Naive thymus-derived CD4-positive, alpha-beta T cell (primary cell): ENCODE measurements at regions of chrX and their contacts with region 1.

Region 1: GRCh38 chrX:85003655-85004244 is at the start of gene APOOL:
- DNase-seq: peak; percentile 40 to 79 (median 69)
- ATAC-seq: peak; percentile 99
- H3K4me3 ChIP-seq: peak within 1 kb of the TSS; percentile 81
- H3K4me3 Mint-ChIP-seq: peak within 1 kb of the TSS; percentile 79 to 93 (median 90)
- H3K27ac ChIP-seq: peak within 1 kb of the TSS; percentile 67
- H3K27ac Mint-ChIP-seq: peak within 1 kb of the TSS; percentile 57 to 91 (median 75)
- H3K4me1 ChIP-seq: peaks cover 0 to 6% of the 10 kb centered on the region in 2 donors
- H3K4me1 Mint-ChIP-seq: peaks cover 9 to 35% (median 23%) of the 10 kb centered on the region in 7 donors
- H3K27me3 ChIP-seq: no peaks in the 10 kb centered on the region
- H3K27me3 Mint-ChIP-seq: peaks cover 0 to under 1% (median 0%) of the 10 kb centered on the region in 5 donors
- total RNA-seq, gene APOOL: 7.5 to 14.8 (median 10.2) TPM

Region 2: GRCh38 chrX:83984961-83985360 is 1018.8 kb before region 1 on chrX:
- CTCF ChIA-PET with region 1: no interaction called
- POLR2A ChIA-PET with region 1: no interaction called
- intact Hi-C with region 1: no loop called
- DNase-seq: no peak
- ATAC-seq: no peak
- H3K4me3 ChIP-seq: no peak overlapping the region
- H3K4me3 Mint-ChIP-seq: no peak overlapping the region
- H3K27ac ChIP-seq: no peak overlapping the region
- H3K27ac Mint-ChIP-seq: no peak overlapping the region
- H3K4me1 ChIP-seq: no peaks in the 10 kb centered on the region
- H3K4me1 Mint-ChIP-seq: no peaks in the 10 kb centered on the region
- H3K27me3 ChIP-seq: no peaks in the 10 kb centered on the region
- H3K27me3 Mint-ChIP-seq: no peaks in the 10 kb centered on the region

Region 3: GRCh38 chrX:84501798-84502628 is 501.7 kb before region 1 on chrX and contains the start of gene HDX:
- CTCF ChIA-PET with region 1: no interaction called
- POLR2A ChIA-PET with region 1: no interaction called
- intact Hi-C with region 1: loop called in 1 of 2 experiments (anchors 2 kb)
- DNase-seq: peak; percentile 17 to 69 (median 43)
- ATAC-seq: peak; percentile 96
- H3K4me3 ChIP-seq: peak within 1 kb of the TSS; percentile 66
- H3K4me3 Mint-ChIP-seq: peak within 1 kb of the TSS; percentile 75 to 99 (median 90)
- H3K27ac ChIP-seq: peak within 1 kb of the TSS; percentile 57
- H3K27ac Mint-ChIP-seq: peak within 1 kb of the TSS; percentile 69 to 98 (median 87)
- H3K4me1 ChIP-seq: no peaks in the 10 kb centered on the region
- H3K4me1 Mint-ChIP-seq: peaks cover 0 to 13% (median 5%) of the 10 kb centered on the region in 7 donors
- H3K27me3 ChIP-seq: no peaks in the 10 kb centered on the region
- H3K27me3 Mint-ChIP-seq: no peaks in the 10 kb centered on the region
- total RNA-seq, gene HDX: 0.32 to 3.4 (median 1.3) TPM

Region 4: GRCh38 chrX:85503258-85504158 is 499.8 kb after region 1 on chrX:
- CTCF ChIA-PET with region 1: no interaction called
- POLR2A ChIA-PET with region 1: no interaction called
- intact Hi-C with region 1: no loop called
- DNase-seq: no peak
- ATAC-seq: no peak
- H3K4me3 ChIP-seq: no peak overlapping the region
- H3K4me3 Mint-ChIP-seq: no peak overlapping the region
- H3K27ac ChIP-seq: no peak overlapping the region
- H3K27ac Mint-ChIP-seq: no peak overlapping the region
- H3K4me1 ChIP-seq: no peaks in the 10 kb centered on the region
- H3K4me1 Mint-ChIP-seq: no peaks in the 10 kb centered on the region
- H3K27me3 ChIP-seq: no peaks in the 10 kb centered on the region
- H3K27me3 Mint-ChIP-seq: no peaks in the 10 kb centered on the region

Region 5: DNA sequence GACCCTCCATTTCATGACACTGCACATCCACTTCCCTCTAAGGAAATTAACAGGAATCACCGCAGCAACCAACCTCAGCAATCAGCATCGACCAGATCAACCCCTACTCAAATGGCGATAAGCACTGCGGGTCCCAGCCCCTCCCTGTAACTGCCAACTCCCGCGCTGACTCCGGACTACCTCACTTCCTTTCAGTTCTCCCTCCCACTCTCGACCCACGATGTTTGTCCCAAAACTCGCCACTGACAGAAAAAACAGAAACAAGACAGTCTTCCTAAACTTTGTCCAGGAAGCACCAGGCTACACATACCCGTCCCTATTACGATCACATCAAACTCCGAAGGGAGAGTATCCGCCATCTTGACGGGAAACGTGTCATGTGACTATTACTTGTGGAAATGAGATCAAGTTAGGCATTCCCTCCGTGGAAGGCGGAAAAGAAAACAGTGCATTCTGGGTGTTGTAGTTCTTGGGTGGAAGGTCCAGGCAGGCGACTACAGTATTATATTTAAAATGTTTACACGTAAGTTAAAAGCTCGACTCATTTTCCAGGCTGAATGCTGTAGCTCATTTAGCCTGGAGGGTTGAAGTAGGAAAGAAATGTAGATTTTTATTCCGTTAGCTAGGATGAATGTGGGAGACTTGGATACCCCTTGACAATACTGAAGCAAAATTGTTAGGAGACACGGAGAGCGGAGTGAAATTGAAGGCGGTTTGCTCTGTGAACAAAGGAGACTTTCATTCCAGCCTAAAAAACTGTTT is 1043.6 kb after region 1 on chrX and contains the start of gene CHM:
- CTCF ChIA-PET with region 1: no interaction called
- POLR2A ChIA-PET with region 1: no interaction called
- intact Hi-C with region 1: loop called in 1 of 2 experiments (anchors 10 kb)
- DNase-seq: peak; percentile 21 to 74 (median 67)
- ATAC-seq: peak; percentile 96
- H3K4me3 ChIP-seq: peak within 1 kb of the TSS; percentile 71
- H3K4me3 Mint-ChIP-seq: no peak within 1 kb of the TSS
- H3K27ac ChIP-seq: peak within 1 kb of the TSS; percentile 95
- H3K27ac Mint-ChIP-seq: peak within 1 kb of the TSS in 1 of 9 donors; percentile 29
- H3K4me1 ChIP-seq: peaks cover 0 to 7% of the 10 kb centered on the region in 2 donors
- H3K4me1 Mint-ChIP-seq: peaks cover 2 to 21% (median 12%) of the 10 kb centered on the region in 7 donors
- H3K27me3 ChIP-seq: no peaks in the 10 kb centered on the region
- H3K27me3 Mint-ChIP-seq: peaks cover 0 to 5% (median 0%) of the 10 kb centered on the region in 5 donors
- total RNA-seq, gene CHM: 9.0 to 22.6 (median 19.4) TPM